Activated naive CD4-positive, alpha-beta T cell treated with anti-CD3 and anti-CD28 coated beads, Interleukin-2, amount 10 ng/mL, durations not matched to agents 7 days and 5 days (primary cell): ENCODE measurements at regions of chr6 and their contacts with region 1.

Region 1: DNA sequence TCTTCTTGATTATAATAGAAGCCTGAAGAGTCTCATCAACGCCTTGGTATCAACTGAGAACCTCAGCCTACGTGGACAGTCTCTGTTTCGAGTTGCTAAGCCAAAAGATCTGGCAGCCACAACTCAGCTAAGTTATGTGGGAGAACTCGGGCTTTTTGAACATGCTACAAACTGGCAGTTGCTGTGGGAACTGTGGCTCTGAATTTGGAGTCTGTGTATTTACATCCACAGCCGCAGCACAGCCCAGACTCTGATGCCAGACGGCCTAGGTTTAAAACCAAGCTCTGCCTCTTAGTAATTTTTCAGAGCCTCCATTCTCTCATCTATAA is 35.8 kb downstream of the RIPOR2 start:
- DNase-seq: peak; percentile 50
- H3K4me3 Mint-ChIP-seq: no peak overlapping the region
- H3K27ac Mint-ChIP-seq: peak overlapping the region; percentile 77
- H3K4me1 Mint-ChIP-seq: peaks cover 87% of the 10 kb centered on the region
- H3K27me3 Mint-ChIP-seq: no peaks in the 10 kb centered on the region

Region 2: GRCh38 chr6:24888715-24889370 is 11.1 kb before region 1 on chr6:
- CTCF ChIA-PET with region 1: interaction called, 13 read pairs
- DNase-seq: no peak
- H3K4me3 Mint-ChIP-seq: no peak overlapping the region
- H3K27ac Mint-ChIP-seq: no peak overlapping the region
- H3K4me1 Mint-ChIP-seq: peaks cover 79% of the 10 kb centered on the region
- H3K27me3 Mint-ChIP-seq: no peaks in the 10 kb centered on the region

Region 3: GRCh38 chr6:25136854-25137253 is 236.9 kb after region 1 on chr6:
- CTCF ChIA-PET with region 1: no interaction called
- DNase-seq: peak; percentile 23
- H3K4me3 Mint-ChIP-seq: peak overlapping the region; percentile 87
- H3K27ac Mint-ChIP-seq: peak overlapping the region; percentile 97
- H3K4me1 Mint-ChIP-seq: peaks cover 39% of the 10 kb centered on the region
- H3K27me3 Mint-ChIP-seq: no peaks in the 10 kb centered on the region